Mammary epithelial cell (primary cell): ENCODE measurements at regions of chr3 and their contacts with region 1.

Region 1: DNA sequence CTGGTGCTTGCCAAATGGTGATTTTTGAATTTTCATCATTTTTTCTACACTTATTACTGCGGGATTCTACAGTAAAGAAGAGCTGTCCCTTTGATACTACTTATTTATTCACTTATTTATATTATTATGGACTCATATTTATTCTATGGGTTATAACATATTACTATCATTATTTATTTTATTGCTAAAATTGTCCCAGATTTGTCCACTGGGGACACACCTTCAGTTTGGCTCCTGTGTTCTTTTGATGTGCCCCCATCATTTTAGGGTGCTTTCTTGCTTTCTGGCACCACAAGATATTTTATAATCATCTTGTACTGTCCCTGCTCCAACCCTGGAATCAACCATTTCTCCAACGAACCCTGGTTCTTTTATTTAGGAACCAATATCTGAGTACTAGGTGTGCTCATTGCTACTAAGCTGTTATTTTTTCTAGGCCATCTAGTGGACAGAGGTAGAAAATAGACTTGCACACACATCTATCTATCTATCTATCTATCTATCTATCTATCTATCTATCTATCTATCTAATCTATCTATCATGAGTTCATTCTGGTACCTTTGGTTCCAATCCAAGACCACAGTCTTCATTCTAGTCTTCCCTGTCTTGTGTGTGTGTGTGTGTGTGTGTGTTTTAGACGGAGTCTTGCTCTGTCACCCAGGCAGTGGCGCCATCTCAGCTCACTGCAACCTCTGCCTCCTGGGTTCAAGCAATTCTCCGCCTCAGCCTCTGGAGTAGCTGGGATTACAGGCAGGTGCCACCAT is 16.0 kb downstream of the SLC22A14 start:
- DNase-seq: no peak
- H3K4me3 ChIP-seq: no peak overlapping the region
- H3K27ac ChIP-seq: no peak overlapping the region
- H3K4me1 ChIP-seq: no peaks in the 10 kb centered on the region
- H3K27me3 ChIP-seq: no peaks in the 10 kb centered on the region
- CTCF ChIP-seq: peak; percentile 36 to 52

Region 2: DNA sequence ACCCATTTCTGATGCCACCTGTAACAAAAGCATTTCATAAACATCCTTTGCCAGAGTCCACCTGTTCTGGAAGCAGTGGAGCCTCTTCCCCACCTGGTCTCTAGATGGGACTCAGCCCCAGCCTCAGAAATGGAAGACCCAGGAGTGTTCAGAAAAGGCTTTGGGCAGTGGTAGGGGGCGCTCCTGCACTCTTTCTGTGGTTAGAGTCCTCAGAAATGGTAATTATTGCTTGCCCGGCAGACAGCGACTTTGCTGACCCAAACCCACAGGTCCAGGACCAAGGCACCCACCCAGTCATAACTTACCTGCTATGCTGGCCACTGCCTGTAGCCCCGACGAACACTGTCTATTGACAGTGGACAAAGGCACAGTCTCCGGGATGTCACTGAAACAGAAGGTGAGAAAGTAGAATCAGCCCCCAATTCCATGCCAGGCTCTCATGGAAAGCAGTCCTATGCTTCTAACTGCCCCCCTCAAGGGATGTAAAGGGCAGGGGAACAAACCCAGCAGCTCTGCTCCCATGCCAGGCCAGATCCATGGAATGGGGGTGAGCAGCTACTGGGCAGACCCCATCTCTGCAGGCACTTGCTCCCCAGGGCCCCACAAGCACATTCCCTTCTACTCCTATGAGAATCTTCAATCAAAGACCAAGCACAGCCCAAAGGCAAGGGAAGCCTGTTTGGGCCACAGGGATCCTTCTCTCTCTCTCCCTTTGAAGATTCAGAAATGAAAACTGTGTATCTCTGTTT is 166.3 kb before region 1 on chr3:
- CTCF ChIA-PET with region 1: no interaction called
- dilution Hi-C with region 1: no loop called
- in situ Hi-C with region 1: no loop called
- intact Hi-C with region 1: loop called (anchors 2 kb)
- DNase-seq: no peak
- H3K4me3 ChIP-seq: no peak overlapping the region
- H3K27ac ChIP-seq: no peak overlapping the region
- H3K4me1 ChIP-seq: peaks cover 15% of the 10 kb centered on the region
- H3K27me3 ChIP-seq: no peaks in the 10 kb centered on the region
- CTCF ChIP-seq: peak in 1 of 2 donors; percentile 51

Region 3: DNA sequence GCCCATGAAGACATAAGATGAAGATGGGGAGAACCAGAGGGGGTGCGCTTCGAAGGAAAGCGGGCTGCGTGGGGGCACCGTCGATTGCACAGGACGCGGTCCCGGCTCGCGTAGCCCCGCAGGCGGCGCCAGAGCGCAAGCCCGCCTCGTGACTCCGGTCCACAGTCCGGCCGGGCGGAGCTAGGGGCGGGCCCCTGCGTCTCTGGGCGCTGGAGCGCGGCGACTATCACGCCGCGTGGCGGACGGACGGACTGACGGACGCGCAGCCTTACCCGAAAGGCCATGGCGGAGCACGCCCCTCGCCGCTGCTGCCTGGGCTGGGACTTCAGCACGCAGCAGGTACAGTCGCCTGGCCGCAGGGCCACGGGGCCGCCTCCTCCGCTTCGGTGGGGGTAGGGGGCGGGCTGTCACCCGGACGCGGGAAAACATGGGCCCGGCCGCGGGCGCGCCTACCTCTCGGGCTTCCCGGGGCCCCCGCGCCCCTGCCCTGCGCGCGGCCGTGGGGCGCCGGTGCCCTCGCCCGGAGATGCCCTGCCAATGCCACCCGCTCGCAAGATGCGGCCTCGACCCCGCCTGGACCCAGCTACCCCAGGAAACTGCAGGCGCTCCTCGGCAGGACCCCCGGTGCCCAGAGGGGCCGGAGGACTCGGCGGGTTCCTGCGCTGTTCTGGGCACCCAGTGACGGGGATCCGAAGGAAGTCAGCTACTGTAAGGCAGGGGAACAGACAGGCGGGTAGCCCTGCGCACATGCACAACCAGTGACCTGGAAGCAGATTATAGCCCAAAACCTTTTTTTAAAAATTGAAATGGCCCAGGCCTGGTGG is 48.7 kb after region 1 on chr3 and contains the start of gene XYLB:
- CTCF ChIA-PET with region 1: interaction called, 25 read pairs
- dilution Hi-C with region 1: no loop called
- in situ Hi-C with region 1: no loop called
- intact Hi-C with region 1: no loop called
- DNase-seq: peak; percentile 75
- H3K4me3 ChIP-seq: peak within 1 kb of the TSS; percentile 76 to 91 (median 90)
- H3K27ac ChIP-seq: no peak within 1 kb of the TSS
- H3K4me1 ChIP-seq: peaks cover 4% of the 10 kb centered on the region
- H3K27me3 ChIP-seq: no peaks in the 10 kb centered on the region
- CTCF ChIP-seq: peak; percentile 59 to 88
- total RNA-seq, gene XYLB: 3.0 to 4.5 TPM

Region 4: GRCh38 chr3:38359038-38359437 is 60.9 kb after region 1 on chr3:
- CTCF ChIA-PET with region 1: no interaction called
- dilution Hi-C with region 1: no loop called
- in situ Hi-C with region 1: no loop called
- intact Hi-C with region 1: no loop called
- DNase-seq: no peak
- H3K4me3 ChIP-seq: no peak overlapping the region
- H3K27ac ChIP-seq: no peak overlapping the region
- H3K4me1 ChIP-seq: peaks cover 10% of the 10 kb centered on the region
- H3K27me3 ChIP-seq: no peaks in the 10 kb centered on the region
- CTCF ChIP-seq: no peak